ENCODE measurements at regions of chr12 and their contacts with region 1.

Region 1: GRCh38 chr12:55188974-55189556 is 31.8 kb upstream of the OR10A7 start:
- DNase-seq: peak; percentile 91

Region 2: DNA sequence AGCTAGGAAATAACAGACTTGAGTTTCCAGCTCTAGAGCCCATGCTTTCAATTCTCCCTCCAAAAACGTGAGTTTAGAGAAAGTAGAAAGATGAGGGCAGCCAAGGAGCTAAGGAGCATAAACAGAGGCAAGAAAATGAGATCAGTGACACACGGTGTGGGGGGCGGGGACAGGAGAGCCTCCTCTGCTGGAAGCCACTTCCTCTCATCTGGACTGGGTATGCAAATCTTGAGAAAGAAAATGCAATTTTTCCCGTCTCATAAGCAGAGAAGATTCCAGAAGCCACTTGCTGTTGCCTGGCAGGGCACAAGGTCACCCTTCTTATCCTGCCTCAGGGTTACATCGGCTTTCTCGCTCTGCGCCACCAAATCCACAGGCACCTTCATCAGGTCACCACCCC is 453.6 kb after region 1 on chr12:
- in situ Hi-C with region 1: loop called (anchors 25 kb)
- DNase-seq: peak; percentile 61

Region 3: GRCh38 chr12:55670276-55670675 is 481.2 kb after region 1 on chr12:
- in situ Hi-C with region 1: no loop called
- DNase-seq: no peak

Measured in KBM-7 (cell line).